Ovary (tissue), 10 donors: ENCODE measurements at regions of chr18 and their contacts with region 1.

Region 1: GRCh38 chr18:24868760-24869237 is 408.4 kb downstream of the HRH4 start:
- DNase-seq: no peak
- H3K4me3 ChIP-seq: no peak overlapping the region
- H3K27ac ChIP-seq: no peak overlapping the region
- H3K4me1 ChIP-seq: no peaks in the 10 kb centered on the region
- H3K27me3 ChIP-seq: no peaks in the 10 kb centered on the region
- CTCF ChIP-seq: no peak
- EP300 ChIP-seq: no peak
- POLR2A ChIP-seq: no peak

Region 2: GRCh38 chr18:25517881-25518715 is 649.3 kb after region 1 on chr18:
- intact Hi-C with region 1: no loop called
- DNase-seq: no peak
- H3K4me3 ChIP-seq: no peak overlapping the region
- H3K27ac ChIP-seq: no peak overlapping the region
- H3K4me1 ChIP-seq: no peaks in the 10 kb centered on the region
- H3K27me3 ChIP-seq: no peaks in the 10 kb centered on the region
- CTCF ChIP-seq: no peak
- EP300 ChIP-seq: no peak
- POLR2A ChIP-seq: no peak

Region 3: DNA sequence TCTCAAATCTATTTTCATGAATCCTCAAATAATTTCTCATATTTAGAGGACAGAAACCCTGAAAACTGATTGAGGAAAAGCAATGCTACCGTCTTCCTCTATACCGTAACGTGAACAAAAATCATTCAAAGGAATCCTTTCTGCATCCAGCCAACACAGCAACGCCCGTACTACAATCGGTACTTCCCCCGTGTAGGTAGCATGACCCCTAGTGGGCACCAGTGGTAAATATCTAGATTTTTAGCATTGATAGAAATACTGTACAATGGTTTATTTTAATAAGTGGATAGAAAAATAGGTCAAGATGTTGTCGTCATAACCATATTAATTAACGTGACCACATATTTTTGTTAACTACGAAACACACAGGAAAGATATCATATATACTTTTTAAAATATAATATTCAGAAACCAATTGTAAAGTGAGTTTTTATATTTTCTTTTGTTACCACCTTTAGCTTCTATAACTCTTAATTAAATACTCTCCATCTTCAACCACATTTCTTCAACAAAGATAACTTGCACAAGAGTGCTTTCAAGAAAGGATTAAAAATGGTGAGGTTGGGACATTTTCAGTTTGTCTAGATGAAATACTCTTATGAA is 1027.5 kb after region 1 on chr18:
- intact Hi-C with region 1: loop called in 2 of 4 experiments (anchors 5 to 10 kb)
- DNase-seq: peak in 3 of 5 donors; percentile 11 to 52 (median 41)
- H3K4me3 ChIP-seq: no peak overlapping the region
- H3K27ac ChIP-seq: no peak overlapping the region
- H3K4me1 ChIP-seq: no peaks in the 10 kb centered on the region
- H3K27me3 ChIP-seq: no peaks in the 10 kb centered on the region
- CTCF ChIP-seq: peak; percentile 45 to 59 (median 49)
- EP300 ChIP-seq: no peak
- POLR2A ChIP-seq: no peak